CD4-positive, alpha-beta T cell (primary cell): ENCODE measurements at regions of chr18 and their contacts with region 1.

Region 1: GRCh38 chr18:36688020-36688965 is 140.5 kb downstream of the TPGS2 start:
- DNase-seq: peak in 11 of 14 experiments; percentile 4 to 45 (median 16)
- ATAC-seq: no peak
- H3K4me3 ChIP-seq: no peak overlapping the region
- H3K4me3 Mint-ChIP-seq: no peak overlapping the region
- H3K27ac ChIP-seq: no peak overlapping the region
- H3K27ac Mint-ChIP-seq: no peak overlapping the region
- H3K4me1 ChIP-seq: no peaks in the 10 kb centered on the region
- H3K4me1 Mint-ChIP-seq: no peaks in the 10 kb centered on the region
- H3K27me3 ChIP-seq: peaks cover 0 to 5% of the 10 kb centered on the region in 2 experiments
- H3K27me3 Mint-ChIP-seq: peaks cover 37% of the 10 kb centered on the region
- CTCF ChIP-seq: peak; percentile 76

Region 2: DNA sequence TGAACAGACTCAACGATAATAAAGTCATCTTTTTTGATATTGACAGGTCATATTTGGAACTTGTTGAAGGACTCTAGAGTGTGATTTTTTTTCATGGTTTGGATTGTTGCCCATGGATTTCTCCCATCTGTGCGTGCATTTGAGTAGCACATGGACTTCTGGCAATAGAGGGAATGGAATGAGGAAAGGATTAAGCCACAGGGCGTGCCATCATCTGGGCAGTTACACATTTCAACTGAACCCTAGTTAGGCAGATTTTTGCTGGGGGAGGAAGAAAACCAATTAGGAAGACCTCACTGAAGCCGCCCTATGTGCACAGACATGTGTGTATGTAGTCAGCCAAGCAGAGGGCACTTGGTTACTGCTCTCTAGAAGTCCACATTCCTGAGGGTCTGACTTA is 67.9 kb after region 1 on chr18:
- CTCF ChIA-PET with region 1: no interaction called
- POLR2A ChIA-PET with region 1: no interaction called
- intact Hi-C with region 1: no loop called
- DNase-seq: no peak
- ATAC-seq: no peak
- H3K4me3 ChIP-seq: no peak overlapping the region
- H3K4me3 Mint-ChIP-seq: no peak overlapping the region
- H3K27ac ChIP-seq: no peak overlapping the region
- H3K27ac Mint-ChIP-seq: no peak overlapping the region
- H3K4me1 ChIP-seq: no peaks in the 10 kb centered on the region
- H3K4me1 Mint-ChIP-seq: no peaks in the 10 kb centered on the region
- H3K27me3 ChIP-seq: peaks cover 0 to 3% of the 10 kb centered on the region in 2 experiments
- H3K27me3 Mint-ChIP-seq: peaks cover 27% of the 10 kb centered on the region
- CTCF ChIP-seq: no peak

Region 3: DNA sequence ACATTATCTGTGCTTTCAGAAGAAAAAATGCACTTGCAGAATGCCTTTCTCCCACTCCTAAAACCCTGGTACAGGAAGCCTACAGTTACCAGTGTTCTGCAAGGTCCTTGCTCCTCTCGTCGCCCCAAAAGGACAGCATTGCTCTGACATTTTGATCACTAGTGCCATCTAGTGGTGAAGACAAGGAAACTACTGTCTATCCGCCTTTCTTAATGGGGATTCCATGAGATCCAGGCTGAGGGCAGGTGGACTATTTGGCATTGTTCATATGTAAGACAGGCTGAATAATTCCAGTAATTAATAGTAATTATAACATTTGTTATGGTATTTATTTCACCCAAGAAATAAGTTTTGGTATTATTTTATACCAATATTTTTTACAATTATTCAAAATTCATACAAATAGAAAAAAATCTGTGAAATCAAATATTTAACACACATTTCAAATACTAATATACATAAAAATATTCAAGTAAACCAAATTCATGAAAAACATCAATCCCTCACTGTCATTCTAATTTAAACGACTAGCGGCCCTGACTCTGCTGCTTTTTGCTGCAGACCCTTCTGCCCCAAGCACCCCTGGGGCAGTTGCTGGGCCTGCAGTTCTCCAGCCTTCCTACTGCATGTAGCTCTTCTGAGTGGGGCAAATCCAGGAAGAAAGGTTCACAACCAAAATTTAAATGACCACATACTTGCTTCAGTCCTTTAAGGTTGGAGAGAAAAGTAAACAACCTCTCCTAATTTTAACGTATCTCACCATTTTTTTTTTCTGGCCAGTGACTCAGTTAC is 121.5 kb after region 1 on chr18:
- CTCF ChIA-PET with region 1: no interaction called
- POLR2A ChIA-PET with region 1: no interaction called
- intact Hi-C with region 1: loop called (anchors 1 to 2 kb)
- DNase-seq: peak in 12 of 14 experiments; percentile 5 to 79 (median 15)
- ATAC-seq: peak; percentile 98
- H3K4me3 ChIP-seq: no peak overlapping the region
- H3K4me3 Mint-ChIP-seq: no peak overlapping the region
- H3K27ac ChIP-seq: no peak overlapping the region
- H3K27ac Mint-ChIP-seq: no peak overlapping the region
- H3K4me1 ChIP-seq: peaks cover 2% of the 10 kb centered on the region
- H3K4me1 Mint-ChIP-seq: peaks cover 14% of the 10 kb centered on the region
- H3K27me3 ChIP-seq: no peaks in the 10 kb centered on the region
- H3K27me3 Mint-ChIP-seq: no peaks in the 10 kb centered on the region
- CTCF ChIP-seq: peak; percentile 87